A673 (cell line): ENCODE measurements at regions of chr14 and their contacts with region 1.

Region 1: GRCh38 chr14:56808383-56809269 is 1.7 kb downstream of the OTX2 start:
- DNase-seq: peak; percentile 75
- H3K4me3 ChIP-seq: peak overlapping the region; percentile 71
- H3K27ac ChIP-seq: peak overlapping the region; percentile 95
- H3K4me1 ChIP-seq: peaks cover 2% of the 10 kb centered on the region
- H3K27me3 ChIP-seq: no peaks in the 10 kb centered on the region
- CTCF ChIP-seq: no peak

Region 2: DNA sequence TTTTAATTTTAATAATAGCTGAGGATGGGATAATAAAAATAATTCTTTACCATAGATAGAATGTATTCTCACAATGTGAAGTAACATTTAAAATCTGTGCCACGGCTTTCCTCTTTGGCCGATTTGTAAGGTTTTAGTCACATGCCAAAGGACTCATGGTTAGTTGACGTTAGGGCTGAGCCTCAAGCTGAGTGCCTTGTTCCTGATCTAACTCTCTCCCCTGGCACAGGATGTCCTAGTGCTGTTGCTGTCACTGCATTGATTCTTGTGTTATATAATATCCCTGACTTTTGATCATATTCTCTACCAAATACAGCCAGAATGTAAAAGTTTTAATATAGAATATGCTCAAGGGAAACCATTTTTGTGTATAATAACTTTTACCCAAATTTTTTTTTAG is 546.1 kb before region 1 on chr14:
- CTCF ChIA-PET with region 1: no interaction called
- POLR2A ChIA-PET with region 1: no interaction called
- intact Hi-C with region 1: no loop called
- DNase-seq: no peak
- H3K4me3 ChIP-seq: no peak overlapping the region
- H3K27ac ChIP-seq: no peak overlapping the region
- H3K4me1 ChIP-seq: no peaks in the 10 kb centered on the region
- H3K27me3 ChIP-seq: no peaks in the 10 kb centered on the region
- CTCF ChIP-seq: no peak

Region 3: GRCh38 chr14:56963381-56963780 is 154.8 kb after region 1 on chr14:
- CTCF ChIA-PET with region 1: no interaction called
- POLR2A ChIA-PET with region 1: no interaction called
- intact Hi-C with region 1: no loop called
- DNase-seq: no peak
- H3K4me3 ChIP-seq: no peak overlapping the region
- H3K27ac ChIP-seq: no peak overlapping the region
- H3K4me1 ChIP-seq: no peaks in the 10 kb centered on the region
- H3K27me3 ChIP-seq: no peaks in the 10 kb centered on the region
- CTCF ChIP-seq: no peak

Region 4: GRCh38 chr14:57040824-57041223 is 232.2 kb after region 1 on chr14:
- CTCF ChIA-PET with region 1: no interaction called
- POLR2A ChIA-PET with region 1: no interaction called
- intact Hi-C with region 1: loop called (anchors 5 kb)
- DNase-seq: no peak
- H3K4me3 ChIP-seq: no peak overlapping the region
- H3K27ac ChIP-seq: no peak overlapping the region
- H3K4me1 ChIP-seq: peaks cover 31% of the 10 kb centered on the region
- H3K27me3 ChIP-seq: no peaks in the 10 kb centered on the region
- CTCF ChIP-seq: no peak

Region 5: GRCh38 chr14:57189070-57189469 is 380.4 kb after region 1 on chr14:
- CTCF ChIA-PET with region 1: no interaction called
- POLR2A ChIA-PET with region 1: no interaction called
- intact Hi-C with region 1: loop called (anchors 5 kb)
- DNase-seq: peak; percentile 90
- H3K4me3 ChIP-seq: no peak overlapping the region
- H3K27ac ChIP-seq: no peak overlapping the region
- H3K4me1 ChIP-seq: peaks cover 21% of the 10 kb centered on the region
- H3K27me3 ChIP-seq: no peaks in the 10 kb centered on the region
- CTCF ChIP-seq: peak; percentile 77